Activated CD4-positive, alpha-beta memory T cell treated with anti-CD3 and anti-CD28 coated beads, Interleukin-2, amount 10 ng/mL, durations not matched to agents 7 days and 5 days (primary cell): ENCODE measurements at regions of chr7 and their contacts with region 1.

Region 1: GRCh38 chr7:132666071-132666774 is 90.0 kb upstream of the PLXNA4 start:
- DNase-seq: peak; percentile 22
- H3K4me3 Mint-ChIP-seq: no peak overlapping the region
- H3K27ac Mint-ChIP-seq: peak overlapping the region; percentile 50
- H3K4me1 Mint-ChIP-seq: peaks cover 15% of the 10 kb centered on the region
- H3K27me3 Mint-ChIP-seq: no peaks in the 10 kb centered on the region

Region 2: GRCh38 chr7:132603220-132603833 is 62.9 kb before region 1 on chr7:
- CTCF ChIA-PET with region 1: no interaction called
- POLR2A ChIA-PET with region 1: no interaction called
- DNase-seq: no peak
- H3K4me3 Mint-ChIP-seq: no peak overlapping the region
- H3K27ac Mint-ChIP-seq: no peak overlapping the region
- H3K4me1 Mint-ChIP-seq: no peaks in the 10 kb centered on the region
- H3K27me3 Mint-ChIP-seq: peaks cover 12% of the 10 kb centered on the region

Region 3: GRCh38 chr7:132654150-132654549 is 12.1 kb before region 1 on chr7:
- CTCF ChIA-PET with region 1: interaction called, 21 read pairs
- POLR2A ChIA-PET with region 1: interaction called, 3 read pairs
- DNase-seq: no peak
- H3K4me3 Mint-ChIP-seq: no peak overlapping the region
- H3K27ac Mint-ChIP-seq: peak overlapping the region; percentile 56
- H3K4me1 Mint-ChIP-seq: peaks cover 38% of the 10 kb centered on the region
- H3K27me3 Mint-ChIP-seq: no peaks in the 10 kb centered on the region

Region 4: GRCh38 chr7:132735476-132735875 is 69.3 kb after region 1 on chr7:
- CTCF ChIA-PET with region 1: no interaction called
- POLR2A ChIA-PET with region 1: no interaction called
- DNase-seq: no peak
- H3K4me3 Mint-ChIP-seq: no peak overlapping the region
- H3K27ac Mint-ChIP-seq: no peak overlapping the region
- H3K4me1 Mint-ChIP-seq: peaks cover 4% of the 10 kb centered on the region
- H3K27me3 Mint-ChIP-seq: peaks cover 9% of the 10 kb centered on the region

Region 5: DNA sequence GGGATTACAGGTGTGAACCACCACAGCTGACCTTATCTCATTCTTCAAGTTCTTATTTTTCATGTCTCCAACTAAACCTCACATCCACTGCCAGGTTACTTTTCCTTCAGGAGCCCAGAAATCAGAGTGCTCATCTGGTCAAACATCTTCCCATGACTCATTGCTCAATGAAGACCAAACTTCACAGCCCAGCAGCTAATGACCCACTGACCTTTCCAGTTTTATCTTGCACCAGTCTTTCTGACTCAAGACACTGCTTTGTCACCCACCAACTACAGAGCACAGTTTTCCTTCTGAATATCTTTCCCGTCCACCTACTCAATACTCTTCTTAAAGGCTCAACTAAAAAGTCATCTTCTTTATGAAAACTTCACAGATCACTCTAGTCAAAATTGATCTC is 170.5 kb after region 1 on chr7:
- CTCF ChIA-PET with region 1: no interaction called
- POLR2A ChIA-PET with region 1: no interaction called
- DNase-seq: no peak
- H3K4me3 Mint-ChIP-seq: no peak overlapping the region
- H3K27ac Mint-ChIP-seq: no peak overlapping the region
- H3K4me1 Mint-ChIP-seq: no peaks in the 10 kb centered on the region
- H3K27me3 Mint-ChIP-seq: no peaks in the 10 kb centered on the region